RWPE1 (cell line): ENCODE measurements at regions of chr5 and their contacts with region 1.

Region 1: GRCh38 chr5:143453720-143454119 is 50.2 kb upstream of the NR3C1 start:
- DNase-seq: no peak
- H3K27ac ChIP-seq: no peak overlapping the region
- CTCF ChIP-seq: no peak

Region 2: GRCh38 chr5:143051244-143052058 is 402.3 kb before region 1 on chr5:
- CTCF ChIA-PET with region 1: no interaction called
- POLR2A ChIA-PET with region 1: no interaction called
- DNase-seq: peak; percentile 63
- H3K27ac ChIP-seq: peak overlapping the region; percentile 73
- CTCF ChIP-seq: no peak

Region 3: DNA sequence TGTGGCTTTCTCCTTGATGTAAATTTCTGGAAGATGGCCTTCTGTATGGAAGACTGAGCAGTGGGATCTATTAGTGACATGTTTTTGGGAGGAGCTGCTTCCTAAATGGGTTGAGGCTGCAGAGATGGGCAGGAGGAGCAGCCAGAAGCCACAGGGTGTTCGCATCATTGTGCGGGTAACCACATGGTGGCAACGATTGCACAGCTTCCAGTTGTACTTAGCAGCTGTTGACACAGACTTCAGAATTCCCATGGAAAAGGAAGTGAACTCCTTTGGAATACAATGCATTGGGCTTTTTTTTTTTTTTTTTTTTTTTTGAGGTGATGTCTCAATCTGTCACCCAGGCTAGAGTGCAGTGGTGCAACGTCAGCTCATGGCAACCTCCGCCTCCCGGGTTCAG is 347.5 kb before region 1 on chr5:
- CTCF ChIA-PET with region 1: no interaction called
- POLR2A ChIA-PET with region 1: no interaction called
- DNase-seq: peak; percentile 64
- H3K27ac ChIP-seq: 0 out of 2 replicates have a peak overlapping the region, but pooled peaks have one; percentile 2
- CTCF ChIP-seq: peak; percentile 48

Region 4: DNA sequence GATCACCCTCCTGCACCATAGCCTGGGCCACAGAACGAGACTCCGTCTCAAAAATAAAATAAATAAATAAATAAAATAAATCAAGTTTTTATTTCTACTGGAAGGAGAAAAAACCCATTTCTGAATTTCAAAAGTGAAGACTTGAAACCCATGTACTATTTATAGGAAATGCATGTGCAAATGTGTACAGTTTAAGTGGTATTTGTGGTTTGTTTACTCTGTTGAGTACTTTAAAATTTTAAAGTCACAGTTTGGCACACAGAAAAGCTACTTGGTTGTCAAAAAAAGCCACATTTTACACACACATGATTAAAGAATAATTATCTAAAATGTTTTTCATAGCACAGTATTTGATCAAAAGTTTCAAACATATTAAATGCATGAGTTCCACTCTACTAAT is 93.9 kb before region 1 on chr5:
- CTCF ChIA-PET with region 1: no interaction called
- POLR2A ChIA-PET with region 1: no interaction called
- DNase-seq: no peak
- H3K27ac ChIP-seq: no peak overlapping the region
- CTCF ChIP-seq: no peak

Region 5: DNA sequence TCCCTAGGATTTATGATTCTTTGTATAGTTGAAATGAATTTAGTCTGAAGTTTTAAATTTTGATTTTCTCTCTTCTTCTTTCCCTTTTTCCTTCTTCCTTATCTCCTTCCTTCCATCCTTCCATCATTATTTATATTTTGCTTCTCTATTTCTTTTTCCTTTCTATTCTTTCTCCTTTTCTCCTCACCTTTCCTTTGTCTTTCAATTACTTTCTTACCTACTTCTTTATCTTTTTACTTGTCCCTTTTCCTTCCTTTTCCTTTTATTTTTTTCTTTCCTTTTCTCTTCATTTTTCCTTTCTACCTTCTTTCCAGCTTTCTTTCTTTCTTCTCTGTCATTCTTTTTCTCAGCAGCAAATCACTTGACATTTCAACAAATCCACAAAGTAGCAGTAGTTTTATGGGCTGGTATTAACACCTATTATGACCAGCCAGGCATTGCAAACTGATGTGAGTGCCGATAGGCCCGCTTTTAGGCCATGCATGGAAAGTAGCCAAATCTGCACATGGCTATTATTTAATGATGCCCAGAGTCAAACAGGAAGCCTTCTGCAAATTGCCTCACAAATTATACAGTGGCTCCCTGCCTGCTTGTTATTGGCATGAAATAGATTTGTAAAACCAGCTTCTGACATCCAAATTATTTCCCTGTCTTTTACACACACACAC is 13.1 kb before region 1 on chr5:
- CTCF ChIA-PET with region 1: interaction called, 3 read pairs
- POLR2A ChIA-PET with region 1: interaction called, 10 read pairs
- DNase-seq: no peak
- H3K27ac ChIP-seq: no peak overlapping the region
- CTCF ChIP-seq: no peak